ENCODE measurements at regions of chr7 and their contacts with region 1.

Region 1: DNA sequence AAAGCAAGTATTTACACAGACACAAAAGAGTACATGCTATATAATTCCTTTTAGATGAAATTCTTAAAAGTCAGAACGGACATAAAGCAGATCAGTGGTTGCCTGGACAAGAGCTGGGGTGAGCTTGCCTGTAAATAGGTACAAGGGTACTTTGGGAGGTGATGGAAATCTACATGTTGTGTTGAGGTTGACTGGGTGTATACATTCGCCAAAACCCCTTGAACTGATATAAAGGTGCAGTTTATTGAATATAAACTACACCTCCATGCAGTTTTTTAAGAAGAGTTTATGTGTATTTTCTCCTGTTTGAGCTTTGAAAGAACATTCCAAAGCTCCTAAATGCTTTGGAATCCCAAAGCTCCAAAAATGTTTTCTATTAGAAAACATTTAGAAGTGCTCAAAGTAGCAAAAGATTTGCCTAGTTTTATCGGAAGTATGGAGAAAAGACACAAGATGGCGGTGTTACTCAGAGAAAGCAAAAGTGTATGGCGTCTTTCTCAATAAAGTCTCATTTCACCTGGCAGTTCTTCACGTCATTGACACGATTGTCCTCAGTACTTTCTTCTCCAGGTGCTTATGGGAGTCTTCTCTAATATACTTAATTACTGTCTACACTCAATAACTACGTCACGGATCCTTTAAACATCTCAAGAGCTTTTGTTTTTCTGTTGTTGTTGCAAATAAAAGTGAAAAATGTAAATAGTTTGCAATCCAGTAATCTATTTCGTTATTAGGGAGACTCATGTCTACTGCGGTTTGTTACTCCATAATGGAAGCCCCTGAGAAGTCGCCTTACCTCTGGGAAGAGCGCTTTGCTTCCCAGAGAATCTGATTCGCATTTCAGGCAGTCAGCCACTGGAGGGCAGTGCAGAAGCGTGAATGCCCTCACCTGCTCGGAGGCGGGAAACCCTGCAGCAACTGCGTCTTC is 14.7 kb upstream of the SEC61G start:
- DNase-seq: peak; percentile 79 to 80
- ATAC-seq: peak; percentile 68 to 96 (median 92)
- H3K4me3 ChIP-seq: peak overlapping the region in 9 of 10 donors; percentile 5 to 52 (median 41)
- H3K27ac ChIP-seq: no peak overlapping the region
- H3K4me1 ChIP-seq: peaks cover 0 to 8% (median 0%) of the 10 kb centered on the region in 9 donors
- H3K27me3 ChIP-seq: peaks cover 0 to 38% (median 21%) of the 10 kb centered on the region in 7 donors
- CTCF ChIP-seq: peak; percentile 73 to 91 (median 83)

Region 2: DNA sequence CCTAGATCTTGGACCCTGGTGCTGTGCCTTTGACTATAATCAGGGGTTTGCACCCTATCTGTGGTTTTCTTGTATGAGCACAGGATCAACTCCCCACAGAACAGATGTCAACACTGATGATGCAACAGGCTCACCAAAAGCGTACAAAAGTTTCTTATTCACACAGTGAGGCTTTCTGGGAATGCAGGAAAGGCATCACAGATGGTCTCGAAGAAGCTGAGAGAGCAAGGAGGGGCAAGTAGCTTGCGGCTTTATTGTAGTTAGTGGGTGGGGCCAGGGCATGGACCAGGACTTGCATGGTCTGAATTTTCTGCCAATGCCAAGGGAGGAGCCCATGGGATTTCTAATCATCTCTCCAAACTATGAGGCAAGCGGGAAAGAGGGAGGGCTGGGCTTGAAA is 60.9 kb before region 1 on chr7:
- intact Hi-C with region 1: no loop called
- DNase-seq: no peak
- ATAC-seq: no peak
- H3K4me3 ChIP-seq: no peak overlapping the region
- H3K27ac ChIP-seq: no peak overlapping the region
- H3K4me1 ChIP-seq: no peaks in the 10 kb centered on the region
- H3K27me3 ChIP-seq: no peaks in the 10 kb centered on the region
- CTCF ChIP-seq: no peak

Region 3: GRCh38 chr7:55255496-55256435 is 482.0 kb after region 1 on chr7:
- intact Hi-C with region 1: loop called (anchors 1 to 5 kb)
- DNase-seq: peak; percentile 71 to 85
- ATAC-seq: peak; percentile 92 to 96 (median 94)
- H3K4me3 ChIP-seq: peak overlapping the region; percentile 46 to 84 (median 60)
- H3K27ac ChIP-seq: peak overlapping the region in 5 of 10 donors; percentile 8 to 65 (median 34)
- H3K4me1 ChIP-seq: peaks cover 0 to 19% (median 11%) of the 10 kb centered on the region in 9 donors
- H3K27me3 ChIP-seq: peaks cover 6 to 55% (median 30%) of the 10 kb centered on the region in 7 donors
- CTCF ChIP-seq: peak; percentile 81 to 97 (median 92)

Region 4: GRCh38 chr7:55260671-55261385 is 487.1 kb after region 1 on chr7:
- intact Hi-C with region 1: loop called in 4 of 10 experiments (anchors 5 kb)
- DNase-seq: no peak
- ATAC-seq: no peak
- H3K4me3 ChIP-seq: no peak overlapping the region
- H3K27ac ChIP-seq: no peak overlapping the region
- H3K4me1 ChIP-seq: peaks cover 0 to 3% (median 0%) of the 10 kb centered on the region in 9 donors
- H3K27me3 ChIP-seq: peaks cover 4 to 31% (median 13%) of the 10 kb centered on the region in 7 donors
- CTCF ChIP-seq: no peak

Region 5: GRCh38 chr7:55415173-55415778 is 641.5 kb after region 1 on chr7:
- intact Hi-C with region 1: loop called in 4 of 10 experiments (anchors 5 to 10 kb)
- DNase-seq: peak; percentile 66 to 83
- ATAC-seq: peak; percentile 72 to 91 (median 79)
- H3K4me3 ChIP-seq: no peak overlapping the region
- H3K27ac ChIP-seq: no peak overlapping the region
- H3K4me1 ChIP-seq: no peaks in the 10 kb centered on the region
- H3K27me3 ChIP-seq: no peaks in the 10 kb centered on the region
- CTCF ChIP-seq: peak; percentile 70 to 90 (median 86)

Region 6: DNA sequence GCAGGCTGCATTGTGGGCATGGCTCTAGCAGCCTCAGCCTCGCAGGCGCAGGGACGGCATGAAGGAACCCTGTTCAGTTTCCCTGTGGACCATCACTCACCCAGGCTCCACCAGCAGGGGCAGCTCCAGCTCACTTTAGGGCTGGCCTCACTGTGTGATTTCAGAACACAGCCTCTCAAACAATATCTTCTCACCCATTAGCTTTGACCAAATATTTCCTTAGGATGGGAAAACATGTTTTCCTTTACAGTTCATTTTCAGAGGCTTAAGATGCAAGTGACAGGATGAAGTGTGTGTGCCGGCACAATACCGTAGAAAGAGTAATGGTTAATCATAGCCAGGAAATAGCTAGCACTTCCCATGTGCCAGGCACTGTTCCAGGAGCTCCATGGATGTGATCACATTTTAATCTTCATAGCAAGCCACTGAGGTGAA is 649.6 kb after region 1 on chr7:
- intact Hi-C with region 1: loop called in 4 of 10 experiments (anchors 5 to 10 kb)
- DNase-seq: no peak
- ATAC-seq: no peak
- H3K4me3 ChIP-seq: no peak overlapping the region
- H3K27ac ChIP-seq: no peak overlapping the region
- H3K4me1 ChIP-seq: no peaks in the 10 kb centered on the region
- H3K27me3 ChIP-seq: no peaks in the 10 kb centered on the region
- CTCF ChIP-seq: no peak